Heart left ventricle (tissue), 16 donors: ENCODE measurements at regions of chr20 and their contacts with region 1.

Region 1: DNA sequence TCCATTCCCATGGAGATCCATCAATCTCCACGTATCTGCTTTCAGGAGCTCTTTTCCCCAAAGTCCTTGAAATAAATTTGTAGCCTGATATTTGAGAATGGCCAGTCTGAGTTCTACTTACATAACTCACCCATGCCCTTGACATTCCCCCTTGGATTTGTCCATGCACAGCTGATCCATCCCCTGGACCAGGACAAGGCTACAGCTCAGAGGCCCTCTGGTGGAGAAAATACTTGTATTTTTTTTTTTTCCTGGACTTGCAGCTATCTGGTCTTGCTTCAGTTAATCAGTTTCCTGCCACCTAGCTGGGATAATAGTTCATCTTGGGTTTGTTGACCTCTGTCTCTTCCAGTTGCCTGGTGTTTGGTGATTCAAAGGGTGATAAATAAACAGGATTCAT is 467.6 kb downstream of the DHX35 start:
- DNase-seq: no peak
- ATAC-seq: peak in 2 of 4 donors; percentile 38 to 60
- H3K4me3 ChIP-seq: no peak overlapping the region
- H3K27ac ChIP-seq: no peak overlapping the region
- H3K4me1 ChIP-seq: no peaks in the 10 kb centered on the region
- H3K27me3 ChIP-seq: no peaks in the 10 kb centered on the region
- CTCF ChIP-seq: peak in 8 of 12 donors; percentile 11 to 56 (median 35)
- POLR2A ChIP-seq: no peak

Region 2: DNA sequence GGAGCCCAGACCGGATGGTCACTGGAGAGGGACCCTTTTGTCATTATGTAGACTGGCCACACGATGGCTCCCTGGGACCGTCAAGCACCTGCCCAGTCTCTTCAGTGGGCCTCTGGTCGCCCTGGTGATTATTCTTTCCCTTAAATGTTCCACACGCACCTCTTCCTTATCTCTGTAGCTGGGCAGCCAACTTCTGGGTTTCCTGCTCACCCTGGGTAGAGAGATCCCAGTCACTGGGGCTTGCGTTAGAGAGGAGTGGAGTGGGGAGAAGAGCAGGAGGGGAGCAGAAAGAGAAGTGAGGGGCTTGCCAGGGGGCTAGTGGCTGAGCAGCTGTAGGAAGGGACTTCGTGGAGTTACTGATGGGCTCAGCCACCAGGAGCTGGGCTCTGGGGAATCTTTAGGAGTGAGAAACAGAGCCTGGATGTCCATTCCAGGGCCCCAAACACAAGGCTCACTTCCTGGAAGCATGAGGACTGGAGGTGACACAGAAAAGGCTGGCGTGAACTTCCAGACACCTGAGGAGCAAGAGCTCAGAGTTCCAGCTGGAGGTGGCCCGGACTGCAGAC is 317.5 kb before region 1 on chr20:
- intact Hi-C with region 1: loop called in 2 of 10 experiments (anchors 5 to 10 kb)
- DNase-seq: peak in 4 of 5 donors; percentile 30 to 51 (median 39)
- ATAC-seq: peak; percentile 73 to 89 (median 84)
- H3K4me3 ChIP-seq: no peak overlapping the region
- H3K27ac ChIP-seq: no peak overlapping the region
- H3K4me1 ChIP-seq: peaks cover 0 to 5% (median 1%) of the 10 kb centered on the region in 12 donors
- H3K27me3 ChIP-seq: peaks cover 0 to 35% (median 14%) of the 10 kb centered on the region in 9 donors
- CTCF ChIP-seq: peak; percentile 43 to 71 (median 63)
- POLR2A ChIP-seq: no peak

Region 3: DNA sequence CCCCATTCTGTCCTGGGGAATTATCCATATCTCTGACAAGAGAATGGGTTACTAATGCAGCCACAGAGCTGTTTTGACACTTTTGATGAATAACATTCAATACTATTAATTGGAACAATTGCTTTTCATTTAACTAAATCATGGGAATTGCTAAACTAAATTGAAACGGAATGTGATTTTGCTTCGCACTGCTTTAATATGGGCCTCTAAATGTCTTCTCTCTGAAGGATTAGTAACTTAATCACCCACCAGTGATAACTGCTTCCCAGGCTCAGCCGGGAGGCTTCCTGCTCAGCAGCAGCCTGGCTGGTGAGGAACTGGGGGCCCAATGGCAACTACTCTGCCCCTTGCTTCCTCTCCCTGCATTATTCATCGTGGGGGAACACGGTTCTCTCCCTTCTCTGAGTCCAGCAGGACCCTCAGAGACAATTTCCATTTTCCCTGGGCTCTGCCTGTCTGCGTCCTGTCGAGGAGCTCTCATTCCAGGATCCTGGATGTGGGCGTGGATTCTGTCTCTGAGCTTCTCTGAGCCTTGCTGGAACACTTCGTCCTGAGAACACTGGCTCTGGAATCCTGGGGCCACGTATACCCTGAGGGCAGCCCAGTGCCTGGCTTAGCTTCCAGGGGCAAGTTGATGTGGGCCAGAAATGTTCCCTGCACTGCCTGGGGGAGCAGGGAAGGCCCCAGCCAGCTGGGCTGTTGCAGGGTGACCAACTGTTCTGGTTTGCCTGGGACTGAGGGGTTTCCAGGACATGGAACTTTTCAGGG is 158.7 kb before region 1 on chr20:
- intact Hi-C with region 1: loop called in 5 of 10 experiments (anchors 5 to 10 kb)
- DNase-seq: peak in 1 of 5 donors; percentile 17
- ATAC-seq: peak; percentile 23 to 70 (median 38)
- H3K4me3 ChIP-seq: no peak overlapping the region
- H3K27ac ChIP-seq: peak overlapping the region in 4 of 12 donors; percentile 30 to 54 (median 39)
- H3K4me1 ChIP-seq: peaks cover 0 to 29% (median 9%) of the 10 kb centered on the region in 12 donors
- H3K27me3 ChIP-seq: no peaks in the 10 kb centered on the region
- CTCF ChIP-seq: no peak
- POLR2A ChIP-seq: no peak